HAP-1 (cell line): ENCODE measurements at regions of chr10 and their contacts with region 1.

Region 1: DNA sequence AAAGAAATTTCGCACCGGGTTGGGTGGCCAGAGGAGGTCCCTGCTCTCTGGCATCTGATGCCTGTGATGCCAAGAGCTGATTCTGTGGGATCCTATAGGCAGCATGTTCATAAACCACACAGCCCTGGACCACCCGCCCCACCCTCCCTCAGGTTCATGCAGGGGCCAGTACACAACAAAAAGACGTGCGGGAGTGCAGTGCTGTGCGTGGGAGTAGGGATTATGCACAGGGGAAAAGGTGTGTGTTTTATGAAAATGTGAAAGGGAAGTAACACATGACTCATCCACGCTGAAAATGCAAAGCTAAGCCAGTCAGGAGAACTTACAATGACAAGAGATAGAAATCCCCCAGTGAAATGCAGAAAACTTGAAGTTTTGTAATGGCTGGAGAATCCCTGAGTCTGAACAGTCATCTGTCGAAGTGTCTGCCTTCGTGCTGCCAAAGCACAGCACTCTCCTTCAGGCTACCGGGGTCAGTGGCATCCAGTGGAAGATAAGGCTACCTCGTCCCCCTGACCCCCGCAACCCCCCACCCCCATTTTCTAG is 1.1 kb downstream of the KIAA1217 start:
- DNase-seq: peak; percentile 60 to 68
- H3K4me3 ChIP-seq: peak overlapping the region; percentile 25
- H3K4me1 ChIP-seq: peaks cover 43% of the 10 kb centered on the region
- H3K27me3 ChIP-seq: no peaks in the 10 kb centered on the region

Region 2: DNA sequence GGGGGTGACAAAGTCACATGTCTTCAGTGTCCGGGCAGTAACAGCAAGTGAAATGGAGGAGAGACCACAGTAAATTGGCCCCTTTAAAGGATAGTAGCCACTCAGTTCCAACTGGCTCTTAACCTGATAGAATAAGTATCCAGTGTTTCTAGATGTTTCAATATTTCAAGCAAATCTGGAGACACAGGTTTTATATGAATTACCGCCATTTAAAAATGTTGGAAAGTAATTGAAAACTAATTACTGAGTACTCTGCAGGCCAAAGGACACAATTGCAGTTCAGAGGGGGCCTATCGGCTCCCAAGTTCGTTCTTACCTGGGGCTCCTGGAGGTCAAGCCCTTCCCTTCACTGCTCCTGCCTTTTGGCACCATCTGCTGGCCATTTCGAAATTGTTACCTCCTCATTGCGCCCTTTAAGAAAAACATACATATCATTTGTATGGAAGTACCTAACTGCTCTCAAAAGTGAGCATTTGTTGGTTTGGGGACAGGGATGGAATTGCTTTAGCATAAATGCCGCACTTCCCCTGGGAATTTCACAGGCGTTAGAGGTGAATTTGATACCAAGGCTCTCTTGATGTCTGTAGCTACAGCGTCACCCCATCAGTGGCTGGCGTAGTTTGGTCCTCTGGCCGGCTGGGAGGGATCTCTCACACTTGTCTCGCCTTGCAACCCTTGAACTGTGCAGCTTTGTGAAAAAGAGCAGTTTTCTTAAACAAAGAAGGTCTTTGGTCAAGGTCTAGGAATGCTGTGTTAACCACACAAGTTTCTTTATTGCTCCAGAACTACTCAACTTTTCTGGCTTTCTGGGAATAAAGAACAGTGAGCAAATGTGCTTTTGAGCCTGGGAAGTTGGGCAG is 293.7 kb after region 1 on chr10:
- in situ Hi-C with region 1: loop called (anchors 25 kb)
- DNase-seq: peak; percentile 42 to 70
- H3K4me3 ChIP-seq: no peak overlapping the region
- H3K4me1 ChIP-seq: peaks cover 4% of the 10 kb centered on the region
- H3K27me3 ChIP-seq: no peaks in the 10 kb centered on the region